IMR-90 (cell line): ENCODE measurements at regions of chr2 and their contacts with region 1.

Region 1: DNA sequence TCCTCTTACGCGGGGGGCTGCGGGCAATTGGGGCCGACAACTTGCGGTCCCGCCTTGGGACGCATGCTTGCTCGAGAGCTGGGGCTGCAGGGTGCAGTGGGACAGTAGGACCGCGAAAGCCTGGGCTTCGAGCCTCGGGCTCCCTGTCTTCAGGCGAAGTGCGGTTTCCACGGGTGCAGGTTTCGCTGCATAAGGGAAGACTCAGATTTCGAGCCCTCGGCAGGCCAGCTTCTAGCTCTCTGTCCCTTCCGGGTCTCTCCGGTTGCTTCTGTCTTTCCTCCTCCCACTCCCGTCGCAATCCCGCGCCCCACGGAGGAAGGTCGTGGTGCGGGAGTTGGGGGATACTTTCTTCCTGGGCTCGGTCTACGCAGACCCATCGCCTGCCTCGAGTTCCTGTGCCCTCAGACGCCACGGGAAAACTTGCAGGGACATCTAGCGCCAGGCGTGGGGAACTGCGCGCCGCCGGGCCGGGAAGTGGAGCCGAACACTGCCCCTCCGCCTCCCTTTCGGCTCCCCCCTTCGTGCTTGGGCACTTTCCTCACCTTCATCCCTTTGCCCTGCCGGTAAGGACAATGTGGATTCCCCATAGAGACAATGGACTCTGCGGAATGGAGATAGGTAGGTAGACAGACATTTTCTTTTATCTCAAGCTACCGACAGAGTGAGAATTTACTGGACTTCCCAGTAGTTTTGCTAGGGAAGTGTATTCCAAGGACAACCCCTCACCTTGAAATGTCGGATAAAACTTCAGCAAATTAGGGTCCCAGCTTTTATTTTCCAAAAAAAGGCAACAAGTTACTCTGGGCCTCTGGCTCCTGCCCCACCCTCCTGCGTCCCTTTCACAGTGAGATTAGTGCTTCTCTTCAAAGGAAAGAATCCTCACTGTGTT is 4.2 kb upstream of the HOXD13 start:
- DNase-seq: peak; percentile 23
- ATAC-seq: peak; percentile 84
- H3K4me3 ChIP-seq: peak overlapping the region; percentile 31
- H3K27ac ChIP-seq: no peak overlapping the region
- H3K4me1 ChIP-seq: no peaks in the 10 kb centered on the region
- H3K27me3 ChIP-seq: peaks cover 88% of the 10 kb centered on the region
- CTCF ChIP-seq: peak; percentile 67
- POLR2A ChIP-seq: no peak
- RAD21 ChIP-seq: peak; percentile 67

Region 2: DNA sequence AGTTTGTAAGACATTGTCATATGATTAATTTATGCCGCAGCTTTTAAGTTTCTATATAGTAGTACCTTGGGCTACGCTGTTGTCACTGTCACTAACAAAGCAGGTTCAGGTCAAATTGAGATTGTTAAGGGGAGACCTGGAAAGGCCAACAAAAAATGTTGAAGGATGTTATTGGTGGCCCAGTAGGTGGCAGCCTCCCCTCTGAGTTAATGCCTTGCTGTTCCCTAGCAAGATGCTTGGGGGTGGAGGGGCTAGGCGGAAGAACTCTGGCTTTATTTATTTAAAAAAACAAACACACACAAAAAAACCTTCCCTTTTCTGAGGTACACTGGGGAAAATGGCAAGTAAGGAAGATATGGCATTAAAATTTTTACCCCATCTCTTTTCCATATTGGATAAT is 778.5 kb before region 1 on chr2:
- CTCF ChIA-PET with region 1: no interaction called
- POLR2A ChIA-PET with region 1: no interaction called
- dilution Hi-C with region 1: no loop called
- in situ Hi-C with region 1: no loop called
- intact Hi-C with region 1: loop called (anchors 2 kb)
- DNase-seq: peak; percentile 10
- ATAC-seq: peak; percentile 75
- H3K4me3 ChIP-seq: no peak overlapping the region
- H3K27ac ChIP-seq: no peak overlapping the region
- H3K4me1 ChIP-seq: no peaks in the 10 kb centered on the region
- H3K27me3 ChIP-seq: peaks cover 4% of the 10 kb centered on the region
- CTCF ChIP-seq: peak; percentile 34
- POLR2A ChIP-seq: no peak
- RAD21 ChIP-seq: peak; percentile 21; the same call in 1 of the 2 replicates

Region 3: GRCh38 chr2:175366815-175367214 is 721.5 kb before region 1 on chr2:
- CTCF ChIA-PET with region 1: no interaction called
- POLR2A ChIA-PET with region 1: no interaction called
- dilution Hi-C with region 1: no loop called
- in situ Hi-C with region 1: loop called (anchors 10 kb)
- intact Hi-C with region 1: loop called (anchors 1 kb)
- DNase-seq: peak; percentile 43
- ATAC-seq: peak; percentile 91
- H3K4me3 ChIP-seq: no peak overlapping the region
- H3K27ac ChIP-seq: no peak overlapping the region
- H3K4me1 ChIP-seq: no peaks in the 10 kb centered on the region
- H3K27me3 ChIP-seq: peaks cover 6% of the 10 kb centered on the region
- CTCF ChIP-seq: peak; percentile 68
- POLR2A ChIP-seq: no peak
- RAD21 ChIP-seq: peak; percentile 68

Region 4: GRCh38 chr2:175414882-175415487 is 673.3 kb before region 1 on chr2:
- CTCF ChIA-PET with region 1: no interaction called
- POLR2A ChIA-PET with region 1: no interaction called
- dilution Hi-C with region 1: no loop called
- in situ Hi-C with region 1: no loop called
- intact Hi-C with region 1: loop called (anchors 2 kb)
- DNase-seq: peak; percentile 54
- ATAC-seq: peak; percentile 75
- H3K4me3 ChIP-seq: no peak overlapping the region
- H3K27ac ChIP-seq: no peak overlapping the region
- H3K4me1 ChIP-seq: no peaks in the 10 kb centered on the region
- H3K27me3 ChIP-seq: no peaks in the 10 kb centered on the region
- CTCF ChIP-seq: peak; percentile 45
- POLR2A ChIP-seq: no peak
- RAD21 ChIP-seq: peak; percentile 31

Region 5: DNA sequence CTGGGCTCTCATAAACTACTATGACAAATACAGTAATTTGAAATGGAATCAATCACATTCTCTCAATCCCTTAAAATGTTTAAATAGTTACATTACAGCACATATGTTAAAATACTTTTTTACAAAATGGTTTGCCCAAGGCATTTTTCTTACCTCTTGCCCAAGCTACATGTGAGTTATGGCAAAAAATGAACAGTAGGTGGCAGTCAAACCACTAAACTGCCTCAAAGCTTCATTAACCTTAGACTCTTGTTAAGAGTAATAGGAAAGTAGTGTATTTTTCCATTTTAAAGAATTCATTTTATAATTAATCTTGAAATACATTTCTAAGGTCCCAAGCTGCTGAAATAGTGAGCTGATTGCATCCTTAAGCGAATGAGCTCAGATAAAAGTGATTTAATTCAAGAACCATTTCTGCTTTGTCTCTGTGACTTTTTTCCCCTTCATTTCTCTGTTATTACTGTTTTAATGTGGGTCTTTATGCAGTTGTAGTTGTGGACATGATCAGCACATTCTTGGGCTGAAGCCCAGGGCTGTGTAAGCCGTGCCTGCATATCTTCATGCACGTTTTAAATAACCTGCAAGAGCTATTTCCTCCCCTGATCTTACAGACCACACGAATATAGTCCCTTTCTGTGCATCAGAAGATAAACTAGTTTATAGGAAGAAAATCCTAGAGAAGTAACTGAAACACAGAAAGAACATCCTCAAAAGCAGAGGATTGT is 398.0 kb before region 1 on chr2:
- CTCF ChIA-PET with region 1: interaction called, 9 read pairs
- POLR2A ChIA-PET with region 1: no interaction called
- dilution Hi-C with region 1: no loop called
- in situ Hi-C with region 1: loop called (anchors 10 kb)
- intact Hi-C with region 1: loop called (anchors 1 kb)
- DNase-seq: peak; percentile 78
- ATAC-seq: peak; percentile 82
- H3K4me3 ChIP-seq: no peak overlapping the region
- H3K27ac ChIP-seq: no peak overlapping the region
- H3K4me1 ChIP-seq: no peaks in the 10 kb centered on the region
- H3K27me3 ChIP-seq: peaks cover 2% of the 10 kb centered on the region
- CTCF ChIP-seq: peak; percentile 85
- POLR2A ChIP-seq: 0 out of 2 replicates have a peak, but pooled peaks have one; percentile 19
- RAD21 ChIP-seq: peak; percentile 82

Region 6: DNA sequence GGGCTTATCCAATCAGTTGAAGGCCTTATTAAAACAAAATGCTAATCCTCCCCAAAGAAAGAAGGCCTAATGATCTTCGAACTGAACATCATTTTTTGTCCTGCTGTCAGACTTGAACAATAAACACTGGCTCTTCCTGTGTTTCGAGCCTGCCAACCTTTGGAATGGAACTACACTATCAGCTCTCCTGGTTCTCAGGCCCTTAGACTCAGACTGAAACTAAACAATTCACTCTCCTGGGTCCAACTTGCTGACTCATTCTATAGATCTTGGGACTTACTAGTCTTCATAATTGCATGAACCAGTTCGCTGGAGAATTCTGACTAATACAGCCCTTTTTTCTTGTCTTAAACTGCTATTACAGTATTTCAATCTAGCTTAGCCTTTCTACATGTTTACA is 321.4 kb before region 1 on chr2:
- CTCF ChIA-PET with region 1: no interaction called
- POLR2A ChIA-PET with region 1: no interaction called
- dilution Hi-C with region 1: no loop called
- in situ Hi-C with region 1: no loop called
- intact Hi-C with region 1: no loop called
- DNase-seq: peak; percentile 54
- ATAC-seq: no peak
- H3K4me3 ChIP-seq: no peak overlapping the region
- H3K27ac ChIP-seq: no peak overlapping the region
- H3K4me1 ChIP-seq: no peaks in the 10 kb centered on the region
- H3K27me3 ChIP-seq: no peaks in the 10 kb centered on the region
- CTCF ChIP-seq: no peak
- POLR2A ChIP-seq: no peak
- RAD21 ChIP-seq: no peak

Region 7: GRCh38 chr2:177078416-177078815 is 990.1 kb after region 1 on chr2:
- CTCF ChIA-PET with region 1: no interaction called
- POLR2A ChIA-PET with region 1: no interaction called
- dilution Hi-C with region 1: no loop called
- in situ Hi-C with region 1: no loop called
- intact Hi-C with region 1: no loop called
- DNase-seq: peak; percentile 3
- ATAC-seq: no peak
- H3K4me3 ChIP-seq: no peak overlapping the region
- H3K27ac ChIP-seq: no peak overlapping the region
- H3K4me1 ChIP-seq: no peaks in the 10 kb centered on the region
- H3K27me3 ChIP-seq: no peaks in the 10 kb centered on the region
- CTCF ChIP-seq: no peak
- POLR2A ChIP-seq: no peak
- RAD21 ChIP-seq: no peak